ENCODE measurements at regions of chr17 and their contacts with region 1.

Region 1: GRCh38 chr17:1908699-1909309 is 79.0 kb downstream of the RPA1 start:
- DNase-seq: peak; percentile 50 to 70
- H3K4me3 ChIP-seq: no peak overlapping the region
- H3K27ac ChIP-seq: no peak overlapping the region
- H3K4me1 ChIP-seq: peaks cover 12% of the 10 kb centered on the region; the same call in 1 of the 2 replicates
- H3K27me3 ChIP-seq: no peaks in the 10 kb centered on the region; the same call in 1 of the 2 replicates
- CTCF ChIP-seq: peak; percentile 83

Region 2: GRCh38 chr17:1764284-1764683 is 144.5 kb before region 1 on chr17:
- CTCF ChIA-PET with region 1: interaction called, 12 read pairs
- POLR2A ChIA-PET with region 1: no interaction called
- intact Hi-C with region 1: no loop called
- DNase-seq: no peak
- H3K4me3 ChIP-seq: no peak overlapping the region
- H3K27ac ChIP-seq: no peak overlapping the region
- H3K4me1 ChIP-seq: no peaks in the 10 kb centered on the region
- H3K27me3 ChIP-seq: no peaks in the 10 kb centered on the region
- CTCF ChIP-seq: no peak

Region 3: GRCh38 chr17:1783834-1784611 is 124.8 kb before region 1 on chr17:
- CTCF ChIA-PET with region 1: no interaction called
- POLR2A ChIA-PET with region 1: no interaction called
- intact Hi-C with region 1: no loop called
- DNase-seq: no peak
- H3K4me3 ChIP-seq: no peak overlapping the region
- H3K27ac ChIP-seq: no peak overlapping the region
- H3K4me1 ChIP-seq: peaks cover 10% of the 10 kb centered on the region
- H3K27me3 ChIP-seq: no peaks in the 10 kb centered on the region
- CTCF ChIP-seq: peak; percentile 79

Region 4: GRCh38 chr17:1852327-1852726 is 56.5 kb before region 1 on chr17:
- CTCF ChIA-PET with region 1: no interaction called
- POLR2A ChIA-PET with region 1: no interaction called
- intact Hi-C with region 1: no loop called
- DNase-seq: no peak
- H3K4me3 ChIP-seq: no peak overlapping the region
- H3K27ac ChIP-seq: no peak overlapping the region
- H3K4me1 ChIP-seq: no peaks in the 10 kb centered on the region
- H3K27me3 ChIP-seq: no peaks in the 10 kb centered on the region
- CTCF ChIP-seq: no peak

Region 5: DNA sequence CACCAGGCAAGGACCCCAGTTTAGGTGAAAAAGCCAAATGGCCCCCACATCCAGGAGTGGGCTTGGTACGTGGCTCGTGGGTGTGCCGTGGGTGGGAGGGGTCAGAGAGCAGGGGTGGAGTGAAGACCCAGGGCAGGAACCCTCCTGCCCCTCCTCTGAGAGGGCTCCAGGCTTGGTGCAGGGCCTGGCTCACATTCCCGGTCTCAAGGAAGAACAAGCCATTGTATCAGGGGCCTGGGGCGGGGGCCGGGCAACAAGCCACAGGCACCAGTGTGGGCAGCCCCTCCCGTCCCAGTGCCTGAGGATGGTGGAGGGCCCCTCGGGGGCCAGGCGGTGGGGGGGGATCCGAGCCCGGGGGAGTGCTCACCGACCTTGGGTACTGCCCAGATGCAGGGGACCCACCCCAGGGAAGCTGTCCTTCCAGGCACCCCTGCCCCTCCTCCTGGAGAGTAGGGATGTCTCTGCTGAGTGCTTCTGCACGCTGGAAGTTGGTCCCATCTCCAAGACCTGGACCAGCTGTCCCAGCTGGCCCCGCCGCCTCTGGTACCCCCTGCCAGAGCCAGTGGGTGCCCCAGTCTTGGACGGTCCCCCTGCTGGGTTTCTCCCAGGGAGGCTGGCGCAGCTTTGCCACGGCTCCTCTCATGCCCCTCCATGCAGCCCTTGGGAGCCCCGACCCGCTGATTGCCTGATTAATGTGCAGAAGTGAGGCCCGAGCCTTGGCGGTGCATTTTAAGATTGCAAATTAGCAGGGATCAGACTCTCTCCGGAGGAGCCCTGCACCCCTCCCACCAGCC is 32.7 kb after region 1 on chr17:
- CTCF ChIA-PET with region 1: interaction called, 23 read pairs
- POLR2A ChIA-PET with region 1: no interaction called
- intact Hi-C with region 1: no loop called
- DNase-seq: no peak
- H3K4me3 ChIP-seq: no peak overlapping the region
- H3K27ac ChIP-seq: no peak overlapping the region
- H3K4me1 ChIP-seq: no peaks in the 10 kb centered on the region
- H3K27me3 ChIP-seq: no peaks in the 10 kb centered on the region
- CTCF ChIP-seq: no peak

Region 6: GRCh38 chr17:1999557-2000251 is 90.9 kb after region 1 on chr17:
- CTCF ChIA-PET with region 1: interaction called, 3 read pairs
- POLR2A ChIA-PET with region 1: interaction called, 14 read pairs
- intact Hi-C with region 1: no loop called
- DNase-seq: peak in 1 of 2 experiments; percentile 54
- H3K4me3 ChIP-seq: no peak overlapping the region
- H3K27ac ChIP-seq: no peak overlapping the region
- H3K4me1 ChIP-seq: peaks cover 12% of the 10 kb centered on the region
- H3K27me3 ChIP-seq: no peaks in the 10 kb centered on the region
- CTCF ChIP-seq: no peak

Region 7: GRCh38 chr17:2029911-2030778 is 121.3 kb after region 1 on chr17 and contains the start of gene DPH1:
- CTCF ChIA-PET with region 1: interaction called, 31 read pairs
- POLR2A ChIA-PET with region 1: interaction called, 4 read pairs
- intact Hi-C with region 1: loop called (anchors 1 kb)
- DNase-seq: peak; percentile 83 to 91
- H3K4me3 ChIP-seq: peak within 1 kb of the TSS; percentile 97
- H3K27ac ChIP-seq: no peak within 1 kb of the TSS
- H3K4me1 ChIP-seq: peaks cover 15% of the 10 kb centered on the region
- H3K27me3 ChIP-seq: 0 out of 2 replicates have a peak, but pooled peaks cover 7% of the 10 kb centered on the region
- CTCF ChIP-seq: no peak
- total RNA-seq, gene DPH1: 36.7 and 44.9 TPM in 2 replicates

Region 8: GRCh38 chr17:2244545-2245525 is 336.0 kb after region 1 on chr17:
- CTCF ChIA-PET with region 1: interaction called, 5 read pairs
- POLR2A ChIA-PET with region 1: no interaction called
- intact Hi-C with region 1: loop called (anchors 1 kb)
- DNase-seq: peak; percentile 56 to 76
- H3K4me3 ChIP-seq: no peak overlapping the region
- H3K27ac ChIP-seq: no peak overlapping the region
- H3K4me1 ChIP-seq: peaks cover 7% of the 10 kb centered on the region
- H3K27me3 ChIP-seq: no peaks in the 10 kb centered on the region
- CTCF ChIP-seq: peak; percentile 99

Region 9: DNA sequence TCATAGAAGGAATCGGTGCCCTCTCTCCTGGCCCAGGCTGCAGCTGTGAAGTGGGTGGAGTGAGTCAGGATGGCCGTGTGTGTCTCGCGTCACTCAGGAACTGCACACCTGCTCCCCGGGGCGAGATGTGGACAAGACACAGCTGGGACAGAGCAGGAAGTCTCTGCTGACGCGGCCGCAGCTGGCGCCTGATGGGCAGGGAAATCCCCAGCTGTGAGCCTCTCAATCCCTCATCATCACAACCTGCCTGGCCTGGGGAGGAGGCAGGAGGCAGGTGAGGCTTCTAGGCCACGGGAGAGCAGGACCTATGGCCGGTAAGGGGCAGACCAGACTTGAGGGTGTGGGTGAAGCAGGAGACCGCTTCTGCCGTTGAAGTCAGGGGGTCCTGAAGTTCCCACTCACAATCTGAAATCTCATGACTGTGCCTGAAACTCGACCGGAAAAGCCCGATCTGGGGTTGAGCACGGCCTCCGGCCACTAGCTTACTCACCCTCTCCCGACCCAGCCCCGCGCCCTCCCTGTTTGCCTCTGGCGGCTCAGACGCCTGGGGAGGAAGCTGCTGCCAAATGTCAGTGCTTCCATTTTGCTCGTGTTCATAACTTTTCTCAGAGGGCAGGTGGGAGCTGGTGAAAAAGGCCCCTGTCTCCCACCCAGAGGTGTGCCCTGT is 1649.9 kb after region 1 on chr17:
- CTCF ChIA-PET with region 1: no interaction called
- POLR2A ChIA-PET with region 1: no interaction called
- intact Hi-C with region 1: no loop called
- DNase-seq: peak; percentile 57 to 74
- H3K4me3 ChIP-seq: peak overlapping the region; percentile 7; the same call in 1 of the 2 replicates
- H3K27ac ChIP-seq: peak overlapping the region; percentile 60
- H3K4me1 ChIP-seq: peaks cover 29% of the 10 kb centered on the region
- H3K27me3 ChIP-seq: no peaks in the 10 kb centered on the region
- CTCF ChIP-seq: no peak